ENCODE measurements at regions of chr19 and their contacts with region 1.

Region 1: GRCh38 chr19:50198429-50199258 is 4.8 kb upstream of the MYH14 start:
- DNase-seq: peak in 4 of 5 donors; percentile 42 to 76 (median 62)
- ATAC-seq: peak; percentile 27 to 63 (median 51)
- H3K4me3 ChIP-seq: peak overlapping the region in 1 of 12 donors; percentile 15
- H3K27ac ChIP-seq: peak overlapping the region; percentile 14 to 90 (median 72)
- H3K4me1 ChIP-seq: peaks cover 0 to 29% (median 15%) of the 10 kb centered on the region in 12 donors
- H3K27me3 ChIP-seq: peaks cover 0 to 26% (median 10%) of the 10 kb centered on the region in 9 donors
- CTCF ChIP-seq: no peak
- POLR2A ChIP-seq: no peak

Region 2: DNA sequence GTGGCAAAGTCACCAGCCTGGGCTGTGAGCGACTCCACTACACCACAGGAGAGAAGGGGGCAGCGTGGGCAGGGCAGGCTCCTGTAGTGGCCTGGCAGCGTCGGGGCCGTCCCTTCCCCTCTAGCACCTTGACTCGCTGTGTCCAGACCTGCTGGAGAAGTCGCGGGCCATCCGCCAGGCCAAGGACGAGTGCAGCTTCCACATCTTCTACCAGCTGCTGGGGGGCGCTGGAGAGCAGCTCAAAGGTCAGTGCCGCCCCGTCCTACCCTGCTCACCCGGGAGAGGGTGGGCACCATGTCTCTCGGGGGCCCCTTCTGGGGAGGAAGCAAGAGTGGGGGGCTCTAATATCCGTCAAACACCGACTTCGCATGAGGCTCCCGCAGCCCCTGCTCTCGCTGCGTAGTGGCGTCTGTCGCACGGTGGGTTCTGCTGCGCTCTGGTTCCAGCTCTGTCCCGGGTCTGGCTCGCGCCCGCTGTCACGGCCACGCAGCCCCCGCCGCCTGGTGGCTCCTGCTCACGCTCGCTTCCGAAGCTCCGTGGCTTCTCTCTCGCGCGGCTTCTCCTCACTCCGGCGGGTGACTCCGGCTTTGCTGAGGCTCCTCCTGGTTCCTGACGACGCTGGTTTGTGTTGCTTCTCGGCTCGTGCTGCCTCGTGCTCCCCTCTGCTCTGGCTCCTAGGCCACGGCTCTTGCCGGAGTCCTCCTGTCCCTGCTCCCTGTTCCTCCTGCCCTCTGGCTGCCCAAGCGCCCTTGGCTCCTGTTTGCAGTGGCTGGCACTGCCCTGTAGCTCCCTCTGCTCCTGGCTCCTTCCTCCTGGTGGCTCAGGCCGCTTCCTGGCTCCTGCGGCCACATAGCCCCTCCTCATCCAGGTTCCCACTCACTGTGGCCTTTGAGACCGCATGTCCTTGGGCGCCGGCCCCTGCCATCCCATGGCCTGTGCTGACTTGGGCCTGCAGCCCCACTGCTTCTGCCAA is 32.0 kb after region 1 on chr19:
- intact Hi-C with region 1: loop called in 3 of 10 experiments (anchors 2 to 5 kb)
- DNase-seq: peak in 2 of 5 donors; percentile 43 to 48
- ATAC-seq: peak in 3 of 4 donors; percentile 7 to 20 (median 14)
- H3K4me3 ChIP-seq: no peak overlapping the region
- H3K27ac ChIP-seq: peak overlapping the region in 4 of 12 donors; percentile 5 to 58 (median 28)
- H3K4me1 ChIP-seq: peaks cover 0 to 19% (median 4%) of the 10 kb centered on the region in 12 donors
- H3K27me3 ChIP-seq: no peaks in the 10 kb centered on the region
- CTCF ChIP-seq: no peak
- POLR2A ChIP-seq: no peak

Measured in heart left ventricle (tissue), 16 donors.